Right ventricle myocardium superior (tissue), 1 donor: ENCODE measurements at regions of chr5 and their contacts with region 1.

Region 1: GRCh38 chr5:159156426-159157238 is 52.7 kb downstream of the RNF145 start:
- DNase-seq: no peak
- ATAC-seq: peak; percentile 89

Region 2: GRCh38 chr5:158716668-158717067 is 440.0 kb before region 1 on chr5:
- intact Hi-C with region 1: no loop called
- DNase-seq: no peak
- ATAC-seq: no peak

Region 3: DNA sequence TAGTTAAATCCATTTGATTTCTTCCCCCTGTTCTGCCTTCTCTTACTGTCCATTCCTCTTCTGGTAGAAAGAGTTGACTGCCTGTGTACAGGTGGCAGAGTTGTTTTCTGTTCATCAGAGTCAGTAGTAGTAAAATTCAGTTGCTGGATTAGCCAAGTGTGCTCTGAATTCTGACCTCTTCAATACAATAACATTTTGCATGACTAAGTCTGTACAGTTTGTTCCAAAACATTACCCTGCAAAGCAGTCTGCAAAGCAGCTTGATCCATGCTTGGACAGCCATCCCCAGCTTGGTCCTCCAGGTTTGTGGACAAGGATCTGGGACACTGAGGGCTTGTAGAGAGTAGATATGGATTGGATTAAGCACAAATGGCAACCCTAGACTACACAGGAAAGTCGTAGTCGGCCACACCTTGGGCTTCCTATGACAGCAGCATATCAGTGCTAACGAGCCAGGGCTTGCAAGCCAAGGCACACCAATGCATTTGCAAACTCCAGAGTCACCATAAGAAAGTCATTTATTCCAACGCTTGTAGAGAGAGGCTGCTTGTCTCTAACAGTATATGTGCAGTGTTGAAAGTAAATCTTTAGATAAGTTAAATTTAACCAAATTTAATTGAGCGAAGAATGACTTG is 148.4 kb after region 1 on chr5:
- intact Hi-C with region 1: no loop called
- DNase-seq: no peak
- ATAC-seq: no peak

Region 4: GRCh38 chr5:159316519-159317383 is 160.1 kb after region 1 on chr5:
- intact Hi-C with region 1: loop called (anchors 5 kb)
- DNase-seq: no peak
- ATAC-seq: peak; percentile 45

Region 5: DNA sequence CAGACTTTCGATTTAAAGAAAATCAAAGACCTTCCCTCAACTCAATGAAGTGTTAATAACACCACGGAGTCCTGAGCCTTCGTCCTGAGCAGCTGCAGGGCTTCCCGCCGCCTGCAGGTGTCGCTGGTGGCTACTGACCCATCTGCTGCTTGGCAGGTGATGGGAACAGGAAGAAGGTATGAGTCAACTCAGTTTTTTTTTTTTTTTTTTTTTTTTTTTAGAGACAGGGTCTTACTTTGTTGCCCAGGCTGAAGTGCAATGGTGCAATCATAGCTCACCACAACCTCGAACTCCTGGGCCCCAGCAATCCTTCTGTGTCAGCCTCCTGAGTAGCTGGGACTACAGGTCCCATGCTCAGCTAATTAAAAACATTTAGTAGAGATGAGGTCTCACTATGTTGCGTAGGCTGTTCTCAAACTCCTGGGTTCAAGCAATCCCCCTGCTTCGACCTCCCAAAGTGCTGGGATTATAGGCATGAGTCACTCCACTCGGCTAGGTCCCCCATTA is 359.3 kb after region 1 on chr5:
- intact Hi-C with region 1: no loop called
- DNase-seq: peak; percentile 59
- ATAC-seq: peak; percentile 87